OCI-LY7 (cell line): ENCODE measurements at regions of chr4 and their contacts with region 1.

Region 1: DNA sequence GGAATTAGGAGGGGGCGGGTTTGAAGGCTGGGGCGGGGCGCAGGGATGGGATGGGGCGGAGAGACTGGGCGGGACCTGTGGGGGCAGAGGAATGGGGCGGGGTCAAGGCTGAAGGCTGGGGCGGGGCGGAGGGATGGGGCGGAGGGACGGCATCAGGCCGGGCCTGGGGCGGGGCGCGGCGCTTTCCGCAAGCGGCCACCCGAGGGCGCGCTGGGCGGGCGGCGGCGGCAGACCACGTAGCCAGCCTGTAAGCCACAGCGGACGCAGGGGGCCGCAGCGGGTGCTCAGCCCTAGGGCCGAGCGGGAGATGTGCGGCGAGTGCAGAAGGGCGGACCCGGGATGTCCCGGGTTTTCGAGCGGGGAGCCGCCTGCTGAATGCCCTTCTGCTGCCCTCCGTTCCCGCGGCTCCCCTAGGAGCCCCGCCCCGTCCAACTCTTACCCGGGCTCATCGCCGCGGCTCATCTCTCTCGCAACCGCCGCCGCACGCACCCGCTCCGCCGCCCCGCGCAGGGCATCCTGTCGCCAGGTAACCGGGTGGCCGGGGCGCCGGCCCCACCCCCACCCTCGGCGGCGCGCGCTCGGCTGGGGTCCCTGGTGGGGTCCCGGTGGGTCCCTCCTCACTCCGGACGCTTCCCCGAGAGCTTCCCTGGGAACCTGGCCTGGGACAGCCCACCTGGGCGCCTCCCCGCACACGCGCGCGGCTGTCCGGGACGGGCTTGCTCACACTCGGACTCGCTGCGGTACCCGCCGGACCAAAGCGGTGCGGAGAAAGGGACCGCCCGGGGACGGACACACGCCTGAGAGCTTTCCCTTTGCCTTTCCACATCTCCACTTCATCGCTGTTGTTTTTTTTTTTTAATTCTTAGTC is at the start of gene CCDC110:
- DNase-seq: peak; percentile 94
- H3K4me3 ChIP-seq: peak within 1 kb of the TSS; percentile 92
- H3K27ac ChIP-seq: peak within 1 kb of the TSS; percentile 81
- H3K4me1 ChIP-seq: peaks cover 44% of the 10 kb centered on the region
- CTCF ChIP-seq: peak; percentile 65
- total RNA-seq, gene CCDC110: 1.2 and 1.7 TPM in 2 replicates

Region 2: GRCh38 chr4:184825896-184826690 is 645.4 kb before region 1 on chr4 and contains the start of gene ACSL1:
- CTCF ChIA-PET with region 1: no interaction called
- POLR2A ChIA-PET with region 1: no interaction called
- intact Hi-C with region 1: loop called (anchors 10 kb)
- DNase-seq: peak; percentile 85
- H3K4me3 ChIP-seq: peak within 1 kb of the TSS; percentile 96
- H3K27ac ChIP-seq: peak within 1 kb of the TSS; percentile 22
- H3K4me1 ChIP-seq: peaks cover 39% of the 10 kb centered on the region
- CTCF ChIP-seq: no peak
- total RNA-seq, gene ACSL1: 20.8 and 24.3 TPM in 2 replicates

Region 3: GRCh38 chr4:185304944-185305690 is 166.4 kb before region 1 on chr4:
- CTCF ChIA-PET with region 1: no interaction called
- POLR2A ChIA-PET with region 1: no interaction called
- intact Hi-C with region 1: loop called (anchors 5 kb)
- DNase-seq: peak; percentile 94
- H3K4me3 ChIP-seq: no peak overlapping the region
- H3K27ac ChIP-seq: peak overlapping the region; percentile 72
- H3K4me1 ChIP-seq: peaks cover 66% of the 10 kb centered on the region
- CTCF ChIP-seq: peak; percentile 94

Region 4: DNA sequence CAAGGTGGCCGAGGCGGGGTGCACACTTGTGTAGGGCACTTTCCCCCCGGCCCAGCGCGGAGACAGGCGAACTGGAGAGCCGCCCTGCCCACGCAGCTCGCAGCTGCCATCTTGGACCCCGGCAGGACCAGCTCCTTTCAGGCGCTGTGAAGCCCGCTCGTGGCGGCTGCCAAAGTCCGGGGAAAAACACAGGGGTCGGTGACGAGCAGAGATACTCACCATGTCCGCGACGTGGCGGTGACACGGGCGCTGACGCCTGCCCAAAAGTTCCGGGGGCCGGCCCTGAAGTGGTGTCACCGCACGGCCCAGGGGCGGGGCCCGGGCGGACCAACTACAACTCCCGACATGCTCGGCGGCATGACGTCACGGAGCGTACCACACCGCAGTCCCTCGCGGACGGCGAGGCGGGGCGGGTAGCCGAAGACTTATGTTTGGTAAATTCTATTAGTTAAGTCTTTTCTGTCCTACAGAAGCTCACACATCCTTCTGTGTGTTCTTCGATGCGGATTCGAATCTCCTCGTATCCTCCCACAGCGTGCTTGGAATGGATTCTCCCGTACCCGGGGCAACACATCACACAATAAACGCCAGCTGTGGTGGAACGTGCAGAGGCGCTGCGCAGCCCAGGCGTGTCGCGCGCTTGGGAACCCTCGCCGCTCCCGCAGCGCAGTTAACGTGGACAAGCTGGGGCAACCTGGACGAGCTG is 45.7 kb before region 1 on chr4 and contains the start of gene UFSP2:
- CTCF ChIA-PET with region 1: no interaction called
- POLR2A ChIA-PET with region 1: interaction called, 5 read pairs
- intact Hi-C with region 1: loop called (anchors 1 kb)
- DNase-seq: peak; percentile 94
- H3K4me3 ChIP-seq: peak within 1 kb of the TSS; percentile 88
- H3K27ac ChIP-seq: peak within 1 kb of the TSS; percentile 54
- H3K4me1 ChIP-seq: peaks cover 18% of the 10 kb centered on the region
- CTCF ChIP-seq: no peak
- total RNA-seq, gene UFSP2: 14.0 and 17.3 TPM in 2 replicates

Region 5: DNA sequence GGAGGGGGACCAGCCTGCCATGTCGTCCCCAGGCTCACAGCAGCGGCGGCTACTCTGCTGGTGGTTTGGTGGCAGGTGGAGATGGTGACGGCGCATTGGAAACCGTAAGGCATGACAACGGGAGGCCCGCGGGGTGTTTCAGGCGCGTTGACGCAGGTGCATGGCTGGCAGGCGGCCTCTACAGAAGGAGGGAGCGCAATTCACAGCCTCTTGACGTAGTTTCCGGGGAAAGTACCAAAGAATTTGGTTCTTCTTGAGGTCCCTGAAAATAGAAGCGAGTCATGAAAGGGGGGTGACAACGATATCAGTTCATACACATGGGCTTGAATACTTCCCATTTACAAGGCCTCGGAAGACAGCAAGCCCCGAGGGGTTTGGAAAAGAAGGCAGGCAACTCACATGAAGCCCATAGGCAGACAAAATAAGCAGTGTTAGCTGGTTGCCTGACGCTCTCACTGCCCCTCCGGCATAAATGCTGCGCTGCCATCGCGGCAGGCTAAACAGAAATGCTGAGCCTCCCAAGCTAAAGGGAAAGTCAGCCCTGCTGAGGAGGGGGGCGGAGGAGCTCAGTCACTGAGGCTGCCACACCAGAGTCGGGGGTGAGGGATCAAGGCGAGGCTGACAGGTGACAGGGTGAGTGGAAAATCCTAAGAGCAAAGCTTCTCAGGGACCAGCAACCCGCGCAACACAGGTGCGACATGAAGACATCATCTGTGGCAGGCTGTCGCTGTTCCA is 116.1 kb after region 1 on chr4:
- CTCF ChIA-PET with region 1: no interaction called
- POLR2A ChIA-PET with region 1: interaction called, 8 read pairs
- intact Hi-C with region 1: loop called (anchors 1 kb)
- DNase-seq: peak; percentile 90
- H3K4me3 ChIP-seq: peak overlapping the region; percentile 57
- H3K27ac ChIP-seq: peak overlapping the region; percentile 78
- H3K4me1 ChIP-seq: peaks cover 37% of the 10 kb centered on the region
- CTCF ChIP-seq: no peak

Region 6: DNA sequence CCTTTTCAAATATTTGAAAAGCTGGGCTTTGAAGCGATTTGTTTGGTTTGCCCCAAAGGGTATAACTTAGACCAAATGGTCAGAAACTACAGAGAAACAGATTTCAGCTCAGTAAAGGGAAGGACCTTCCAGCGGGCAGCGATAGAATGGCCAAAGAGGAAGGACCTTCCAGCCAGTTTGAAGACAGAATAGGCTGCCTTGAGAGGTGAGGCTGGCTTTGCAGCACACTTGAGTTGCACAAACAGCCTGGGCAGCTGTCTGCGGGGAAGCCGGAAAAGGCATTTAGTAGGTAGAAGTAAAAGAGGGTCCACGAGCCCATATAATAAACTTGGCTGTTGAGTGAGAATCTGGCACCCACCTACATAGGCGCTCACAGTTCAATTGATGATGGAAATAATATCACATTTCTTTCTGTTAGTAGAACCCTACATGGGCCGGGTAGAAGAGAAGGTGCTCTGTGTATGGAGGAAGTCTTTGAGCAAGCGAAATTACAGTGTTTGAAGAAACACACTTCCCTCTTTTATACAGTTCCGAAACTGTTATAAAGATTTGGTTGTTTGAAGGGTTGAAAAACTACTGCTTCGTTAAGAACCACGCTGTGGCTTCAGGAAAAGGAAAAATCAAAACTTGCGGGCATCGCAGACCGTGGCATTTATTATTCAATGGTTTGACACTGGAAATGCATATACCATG is 415.5 kb after region 1 on chr4:
- CTCF ChIA-PET with region 1: no interaction called
- POLR2A ChIA-PET with region 1: no interaction called
- intact Hi-C with region 1: loop called (anchors 5 kb)
- DNase-seq: peak; percentile 63
- H3K4me3 ChIP-seq: peak overlapping the region; percentile 7
- H3K27ac ChIP-seq: no peak overlapping the region
- H3K4me1 ChIP-seq: peaks cover 12% of the 10 kb centered on the region
- CTCF ChIP-seq: no peak

Region 7: GRCh38 chr4:186037692-186038658 is 566.5 kb after region 1 on chr4:
- CTCF ChIA-PET with region 1: no interaction called
- POLR2A ChIA-PET with region 1: no interaction called
- intact Hi-C with region 1: loop called (anchors 5 kb)
- DNase-seq: peak; percentile 73
- H3K4me3 ChIP-seq: no peak overlapping the region
- H3K27ac ChIP-seq: no peak overlapping the region
- H3K4me1 ChIP-seq: no peaks in the 10 kb centered on the region
- CTCF ChIP-seq: peak; percentile 89